ENCODE measurements at regions of chr4 and their contacts with region 1.

Region 1: GRCh38 chr4:57163530-57164459 is 53.6 kb upstream of the IGFBP7 start:
- DNase-seq: peak; percentile 77 to 84
- ATAC-seq: peak; percentile 95 to 99 (median 97)
- H3K4me3 ChIP-seq: peak overlapping the region; percentile 43 to 77 (median 63)
- H3K27ac ChIP-seq: peak overlapping the region in 9 of 10 donors; percentile 43 to 75 (median 69)
- H3K4me1 ChIP-seq: peaks cover 0 to 14% (median 6%) of the 10 kb centered on the region in 9 donors
- H3K27me3 ChIP-seq: peaks cover 0 to 12% (median 0%) of the 10 kb centered on the region in 7 donors
- CTCF ChIP-seq: peak; percentile 67 to 94 (median 86)

Region 2: DNA sequence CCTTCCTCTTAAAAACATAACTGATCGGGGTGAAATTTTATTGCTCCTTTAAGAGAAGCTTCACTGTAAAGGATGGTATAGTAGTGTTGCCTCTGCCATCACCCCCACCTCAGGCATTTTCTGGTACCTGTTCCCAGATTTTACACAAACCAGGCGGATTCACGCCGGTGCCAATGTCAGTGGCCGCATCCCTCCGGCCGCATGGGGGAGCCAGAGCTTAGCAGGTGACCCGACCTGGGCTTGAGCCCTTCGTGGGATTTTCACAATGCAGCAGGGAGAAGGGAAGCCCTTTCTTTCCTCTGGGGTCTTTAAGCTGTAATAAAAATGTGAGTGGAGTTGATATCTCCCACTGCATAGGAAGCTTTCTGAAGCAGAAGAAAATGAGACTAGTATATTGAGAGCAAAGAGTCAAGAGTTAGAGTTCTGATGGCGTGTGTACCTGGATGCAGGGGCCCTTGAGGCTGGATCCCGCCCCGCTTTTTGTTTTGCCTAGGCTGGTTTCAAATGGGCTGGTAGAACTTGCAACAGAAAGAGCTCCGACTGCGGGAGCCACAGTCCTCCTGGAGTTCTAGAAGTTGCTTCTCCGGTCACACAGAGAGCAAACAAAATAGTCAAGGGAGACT is 125.7 kb before region 1 on chr4:
- intact Hi-C with region 1: loop called (anchors 2 to 10 kb)
- DNase-seq: peak; percentile 60 to 76
- ATAC-seq: peak; percentile 37 to 82 (median 63)
- H3K4me3 ChIP-seq: no peak overlapping the region
- H3K27ac ChIP-seq: peak overlapping the region in 2 of 10 donors; percentile 20 to 93
- H3K4me1 ChIP-seq: peaks cover 10 to 51% (median 23%) of the 10 kb centered on the region in 9 donors
- H3K27me3 ChIP-seq: no peaks in the 10 kb centered on the region
- CTCF ChIP-seq: peak; percentile 66 to 92 (median 81)

Region 3: GRCh38 chr4:57265831-57266582 is 102.2 kb after region 1 on chr4:
- intact Hi-C with region 1: loop called in 2 of 10 experiments (anchors 10 kb)
- DNase-seq: peak; percentile 6 to 21
- ATAC-seq: peak in 7 of 8 donors; percentile 39 to 86 (median 58)
- H3K4me3 ChIP-seq: no peak overlapping the region
- H3K27ac ChIP-seq: no peak overlapping the region
- H3K4me1 ChIP-seq: peaks cover 0 to 16% (median 12%) of the 10 kb centered on the region in 9 donors
- H3K27me3 ChIP-seq: peaks cover 0 to 9% (median 0%) of the 10 kb centered on the region in 7 donors
- CTCF ChIP-seq: peak in 3 of 9 donors; percentile 25 to 34 (median 26)

Region 4: GRCh38 chr4:57303012-57303751 is 139.4 kb after region 1 on chr4:
- intact Hi-C with region 1: loop called in 6 of 10 experiments (anchors 1 to 10 kb)
- DNase-seq: no peak
- ATAC-seq: peak in 2 of 8 donors; percentile 52 to 64
- H3K4me3 ChIP-seq: no peak overlapping the region
- H3K27ac ChIP-seq: no peak overlapping the region
- H3K4me1 ChIP-seq: no peaks in the 10 kb centered on the region
- H3K27me3 ChIP-seq: peaks cover 0 to 8% (median 0%) of the 10 kb centered on the region in 7 donors
- CTCF ChIP-seq: peak in 6 of 9 donors; percentile 13 to 53 (median 26)

Region 5: DNA sequence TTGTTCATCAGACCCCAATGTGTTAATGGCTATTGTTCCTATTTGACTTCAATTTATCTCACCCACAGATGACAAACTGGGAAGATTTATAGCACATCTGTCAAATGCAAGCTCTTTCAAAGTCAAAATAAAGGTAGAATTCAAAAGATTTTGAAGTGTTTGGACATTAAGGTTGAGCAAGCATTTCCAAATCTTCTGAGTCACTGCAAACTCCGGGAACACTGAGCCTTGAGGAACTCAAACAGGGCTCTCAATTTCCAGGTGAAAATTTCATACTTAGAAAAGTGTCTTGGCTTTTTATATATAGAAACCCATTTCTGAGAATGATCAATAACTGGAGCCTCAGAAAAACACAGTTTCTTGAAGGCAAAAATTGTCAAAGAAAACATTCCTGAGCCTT is 145.9 kb after region 1 on chr4:
- intact Hi-C with region 1: loop called in 4 of 10 experiments (anchors 5 to 10 kb)
- DNase-seq: no peak
- ATAC-seq: no peak
- H3K4me3 ChIP-seq: no peak overlapping the region
- H3K27ac ChIP-seq: no peak overlapping the region
- H3K4me1 ChIP-seq: no peaks in the 10 kb centered on the region
- H3K27me3 ChIP-seq: peaks cover 0 to 10% (median 0%) of the 10 kb centered on the region in 7 donors
- CTCF ChIP-seq: no peak

Region 6: DNA sequence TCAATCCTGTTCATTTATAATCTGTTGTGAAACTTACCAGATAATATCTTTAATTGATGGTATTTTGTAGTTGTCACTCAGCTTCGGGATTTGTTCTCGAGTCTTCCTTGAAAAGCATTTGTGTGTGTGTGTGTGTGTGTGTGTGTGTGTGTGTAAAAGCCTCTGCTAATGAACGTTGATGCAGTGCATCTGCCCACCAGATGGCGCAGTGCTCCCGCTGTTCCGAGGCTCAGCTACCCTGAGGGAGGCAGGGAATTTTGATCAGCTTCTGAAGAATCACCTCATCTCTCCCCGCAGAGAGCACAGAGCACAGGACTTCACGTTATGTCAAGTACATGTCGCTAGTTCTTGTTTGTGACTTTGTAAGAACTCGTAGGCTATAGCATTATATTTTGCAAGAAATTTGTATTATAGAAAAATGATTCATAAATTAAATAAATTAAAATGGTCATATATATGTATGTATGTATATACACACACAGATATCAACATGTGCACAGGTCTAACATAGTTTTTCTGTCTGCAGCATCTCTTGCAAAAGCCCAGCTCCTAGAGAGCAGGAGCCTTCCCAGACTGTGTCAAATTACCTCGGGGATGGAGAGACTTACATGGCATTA is 263.1 kb after region 1 on chr4:
- intact Hi-C with region 1: loop called in 8 of 10 experiments (anchors 5 to 10 kb)
- DNase-seq: peak; percentile 56 to 69
- ATAC-seq: peak in 6 of 8 donors; percentile 61 to 76 (median 70)
- H3K4me3 ChIP-seq: no peak overlapping the region
- H3K27ac ChIP-seq: no peak overlapping the region
- H3K4me1 ChIP-seq: no peaks in the 10 kb centered on the region
- H3K27me3 ChIP-seq: peaks cover 0 to 33% (median 3%) of the 10 kb centered on the region in 7 donors
- CTCF ChIP-seq: peak; percentile 27 to 70 (median 56)